Activated B cell treated with CpG ODN at 0.5 μM for 24 hours (primary cell): ENCODE measurements at regions of chrX and their contacts with region 1.

Region 1: DNA sequence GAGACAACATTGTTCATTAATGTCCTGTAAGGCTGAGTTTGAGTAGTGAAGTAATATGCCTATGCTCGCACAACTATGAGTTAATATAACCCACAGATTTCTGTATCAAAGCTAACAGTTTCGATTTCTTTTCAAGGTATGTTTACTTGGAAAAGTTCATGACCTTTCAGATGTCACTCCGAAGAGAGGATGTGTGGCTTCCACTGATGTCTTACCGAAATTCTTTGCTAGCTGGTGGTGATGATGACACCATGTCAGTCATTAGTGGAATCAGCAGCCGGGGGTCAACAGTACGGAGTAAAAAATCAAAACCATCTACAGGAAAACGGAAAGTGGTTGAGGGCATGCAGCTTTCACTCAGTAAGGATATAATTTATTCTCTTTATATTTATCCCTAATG is 124.9 kb downstream of the STAG2 start:
- DNase-seq: no peak
- ATAC-seq: no peak
- H3K4me3 Mint-ChIP-seq: no peak overlapping the region
- H3K27ac Mint-ChIP-seq: no peak overlapping the region
- H3K4me1 Mint-ChIP-seq: no peaks in the 10 kb centered on the region
- H3K27me3 Mint-ChIP-seq: no peaks in the 10 kb centered on the region
- CTCF ChIP-seq: no peak

Region 2: DNA sequence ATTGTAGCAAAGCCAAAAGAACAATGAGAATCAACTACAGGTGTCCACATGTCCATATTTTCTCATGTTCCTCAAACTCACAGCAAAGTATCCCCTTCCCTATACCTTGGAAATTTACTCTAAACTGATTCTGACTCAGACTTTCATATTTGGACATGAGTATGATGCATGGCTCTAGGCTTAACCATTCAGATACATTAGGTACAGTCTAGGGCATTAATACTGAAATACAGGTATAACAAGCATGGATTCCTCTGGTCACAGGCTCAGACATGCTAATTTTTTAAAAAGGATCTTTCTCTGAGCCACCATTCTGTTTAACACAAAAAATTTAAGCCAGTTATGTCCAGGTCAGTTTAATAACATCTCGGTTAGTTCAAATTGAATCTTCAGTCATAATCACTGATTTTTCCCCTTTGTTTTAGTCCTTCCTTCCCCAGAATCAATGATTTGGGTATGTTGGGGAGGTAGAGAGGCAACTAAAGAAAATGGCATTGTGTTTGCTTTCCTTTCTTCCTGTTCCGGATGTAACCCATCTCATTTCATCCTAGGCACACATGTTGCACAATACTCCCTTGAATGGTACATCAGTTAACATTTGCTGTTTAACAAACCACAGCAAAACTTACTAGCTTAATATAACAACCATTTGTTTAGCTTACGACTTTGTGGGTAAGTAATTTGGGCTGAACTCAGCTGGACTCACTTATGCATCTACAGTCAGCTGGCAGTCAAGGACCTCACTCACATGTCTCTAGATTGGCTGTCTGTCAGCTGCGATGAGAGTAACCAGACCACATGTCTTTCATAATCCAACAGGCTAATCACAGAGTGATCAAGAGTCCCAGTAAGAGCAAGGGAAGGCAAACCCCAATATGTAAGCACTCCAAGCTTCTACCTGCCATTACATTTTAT is 977.6 kb before region 1 on chrX:
- CTCF ChIA-PET with region 1: no interaction called
- POLR2A ChIA-PET with region 1: no interaction called
- intact Hi-C with region 1: no loop called
- DNase-seq: no peak
- ATAC-seq: no peak
- H3K4me3 Mint-ChIP-seq: no peak overlapping the region
- H3K27ac Mint-ChIP-seq: no peak overlapping the region
- H3K4me1 Mint-ChIP-seq: no peaks in the 10 kb centered on the region
- H3K27me3 Mint-ChIP-seq: no peaks in the 10 kb centered on the region
- CTCF ChIP-seq: no peak

Region 3: DNA sequence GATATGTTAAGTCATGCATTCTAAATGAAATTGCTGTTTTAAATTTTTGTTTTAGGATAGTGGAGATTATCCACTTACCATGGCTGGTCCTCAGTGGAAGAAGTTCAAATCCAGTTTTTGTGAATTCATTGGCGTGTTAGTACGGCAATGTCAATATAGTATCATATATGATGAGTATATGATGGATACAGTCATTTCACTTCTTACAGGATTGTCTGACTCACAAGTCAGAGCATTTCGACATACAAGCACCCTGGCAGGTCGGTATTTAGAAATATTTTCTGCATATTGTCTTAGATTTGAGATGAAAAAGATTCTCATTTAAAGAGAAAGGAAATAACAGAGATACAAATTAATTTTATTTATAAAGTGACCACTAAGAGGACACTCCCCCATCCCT is 41.3 kb before region 1 on chrX:
- CTCF ChIA-PET with region 1: no interaction called
- POLR2A ChIA-PET with region 1: no interaction called
- intact Hi-C with region 1: loop called (anchors 5 kb)
- DNase-seq: no peak
- ATAC-seq: no peak
- H3K4me3 Mint-ChIP-seq: no peak overlapping the region
- H3K27ac Mint-ChIP-seq: no peak overlapping the region
- H3K4me1 Mint-ChIP-seq: no peaks in the 10 kb centered on the region
- H3K27me3 Mint-ChIP-seq: no peaks in the 10 kb centered on the region
- CTCF ChIP-seq: no peak